OCI-LY7 (cell line): ENCODE measurements at regions of chr12 and their contacts with region 1.

Region 1: GRCh38 chr12:56359851-56360767 is at the start of gene STAT2:
- DNase-seq: peak; percentile 100
- H3K4me3 ChIP-seq: peak within 1 kb of the TSS; percentile 95
- H3K27ac ChIP-seq: peak within 1 kb of the TSS; percentile 53
- H3K4me1 ChIP-seq: peaks cover 39% of the 10 kb centered on the region
- CTCF ChIP-seq: no peak
- total RNA-seq, gene STAT2: 75.3 and 89.0 TPM in 2 replicates

Region 2: DNA sequence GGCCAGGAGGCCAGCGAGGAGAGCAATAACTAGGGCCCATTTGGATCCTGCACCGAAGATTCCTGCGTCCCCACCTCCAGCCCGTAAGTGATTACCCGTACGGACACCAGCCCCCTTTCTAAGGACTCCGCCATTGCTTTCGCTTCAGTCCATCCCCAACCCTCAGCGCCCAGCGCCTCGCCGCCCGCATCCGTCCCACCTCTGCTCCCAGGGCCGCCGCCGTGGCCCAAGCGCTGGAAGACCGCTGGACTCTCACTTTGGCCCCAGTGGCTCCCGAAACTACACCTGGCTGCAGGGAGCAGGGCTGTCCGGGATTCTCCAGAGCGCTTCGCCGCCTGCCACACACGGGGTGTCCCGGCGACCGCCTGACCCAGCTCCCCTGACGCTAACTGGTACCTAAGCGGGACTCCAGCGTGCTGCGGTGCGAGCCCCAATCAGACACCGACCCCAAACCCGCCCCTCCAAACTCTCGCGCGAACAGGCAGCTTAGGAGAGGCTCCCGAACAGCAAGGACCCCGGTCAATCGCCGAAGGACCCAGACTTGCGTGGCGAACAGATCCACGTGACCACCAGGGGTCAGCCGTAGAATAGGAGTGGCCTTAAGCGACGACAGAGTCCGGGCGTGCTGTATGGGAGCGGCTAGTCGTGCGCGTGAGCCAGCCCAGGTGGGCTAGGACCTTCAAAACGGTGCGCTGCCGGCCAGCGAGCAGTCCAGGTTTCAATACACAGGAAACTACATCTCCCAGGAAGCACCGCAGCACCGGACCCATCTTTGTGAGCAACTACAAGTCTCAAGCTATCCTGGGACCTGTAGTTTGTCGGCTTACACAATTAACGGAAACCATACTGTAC is 44.3 kb before region 1 on chr12 and contains the start of gene CNPY2:
- CTCF ChIA-PET with region 1: no interaction called
- POLR2A ChIA-PET with region 1: interaction called, 17 read pairs
- intact Hi-C with region 1: no loop called
- DNase-seq: peak; percentile 96
- H3K4me3 ChIP-seq: peak within 1 kb of the TSS; percentile 83
- H3K27ac ChIP-seq: peak within 1 kb of the TSS; percentile 60
- H3K4me1 ChIP-seq: peaks cover 14% of the 10 kb centered on the region
- CTCF ChIP-seq: peak; percentile 48; the same call in 1 of the 2 replicates
- total RNA-seq, gene CNPY2: 62.8 and 75.5 TPM in 2 replicates

Region 3: GRCh38 chr12:56346703-56347102 is 13.4 kb before region 1 on chr12:
- CTCF ChIA-PET with region 1: interaction called, 6 read pairs
- POLR2A ChIA-PET with region 1: interaction called, 47 read pairs
- intact Hi-C with region 1: no loop called
- DNase-seq: no peak
- H3K4me3 ChIP-seq: no peak overlapping the region
- H3K27ac ChIP-seq: no peak overlapping the region
- H3K4me1 ChIP-seq: no peaks in the 10 kb centered on the region
- CTCF ChIP-seq: peak; percentile 34; the same call in 1 of the 2 replicates

Region 4: DNA sequence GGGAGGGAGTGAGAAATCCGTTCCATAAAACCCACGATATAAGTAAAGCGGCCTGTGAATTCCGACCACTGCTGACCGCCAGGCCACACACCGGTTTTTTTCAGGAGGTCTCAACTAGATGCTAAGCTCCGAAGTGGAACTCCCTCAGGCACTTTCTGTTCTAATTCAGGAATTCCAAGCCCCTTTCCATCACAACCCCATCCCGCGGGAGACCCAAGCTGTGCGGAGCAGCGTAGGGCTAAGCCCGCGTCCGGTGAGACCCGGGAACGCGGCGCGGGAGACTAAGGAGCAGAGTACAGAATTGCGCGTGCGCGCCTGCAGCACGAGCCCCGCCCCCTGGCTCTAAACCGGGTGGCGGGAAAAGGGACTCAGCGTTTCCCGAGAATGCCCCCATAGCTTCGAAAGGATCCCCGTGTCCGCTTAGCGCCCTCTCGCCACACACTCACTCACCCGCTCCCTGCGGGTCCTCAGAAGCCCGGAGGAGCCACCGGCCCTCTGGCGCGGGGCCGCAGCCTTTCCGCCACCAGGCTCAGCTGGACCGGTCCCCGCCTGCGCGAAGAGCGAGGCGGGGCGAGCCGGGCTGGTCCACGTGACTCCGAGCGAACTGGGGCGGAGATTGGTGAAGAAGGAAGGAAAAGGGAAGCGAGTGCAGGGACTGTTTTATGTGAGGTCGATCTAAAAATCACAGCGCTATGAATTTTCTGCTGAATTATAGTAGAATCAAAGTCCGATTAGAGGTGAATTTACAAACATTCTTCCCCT is 88.9 kb after region 1 on chr12 and contains the start of gene TIMELESS:
- CTCF ChIA-PET with region 1: interaction called, 3 read pairs
- POLR2A ChIA-PET with region 1: interaction called, 25 read pairs
- intact Hi-C with region 1: loop called (anchors 2 kb)
- DNase-seq: peak; percentile 92
- H3K4me3 ChIP-seq: peak within 1 kb of the TSS; percentile 88
- H3K27ac ChIP-seq: peak within 1 kb of the TSS; percentile 90
- H3K4me1 ChIP-seq: peaks cover 25% of the 10 kb centered on the region
- CTCF ChIP-seq: no peak
- total RNA-seq, gene TIMELESS: 44.8 and 46.5 TPM in 2 replicates

Region 5: GRCh38 chr12:56468216-56469006 is 108.3 kb after region 1 on chr12 and contains the start of gene SPRYD4:
- CTCF ChIA-PET with region 1: interaction called, 21 read pairs
- POLR2A ChIA-PET with region 1: interaction called, 17 read pairs
- intact Hi-C with region 1: loop called (anchors 1 kb)
- DNase-seq: peak; percentile 97
- H3K4me3 ChIP-seq: peak within 1 kb of the TSS; percentile 89
- H3K27ac ChIP-seq: peak within 1 kb of the TSS; percentile 76
- H3K4me1 ChIP-seq: peaks cover 22% of the 10 kb centered on the region
- CTCF ChIP-seq: peak; percentile 75
- total RNA-seq, gene SPRYD4: 5.3 and 5.9 TPM in 2 replicates

Region 6: GRCh38 chr12:56546680-56547079 is 186.6 kb after region 1 on chr12:
- CTCF ChIA-PET with region 1: no interaction called
- POLR2A ChIA-PET with region 1: no interaction called
- intact Hi-C with region 1: no loop called
- DNase-seq: no peak
- H3K4me3 ChIP-seq: no peak overlapping the region
- H3K27ac ChIP-seq: no peak overlapping the region
- H3K4me1 ChIP-seq: no peaks in the 10 kb centered on the region
- CTCF ChIP-seq: no peak